Activated T-helper 1 cell treated with anti-CD3 and anti-CD28 coated beads, Interleukin-12 subunit alpha, Interleukin-12 subunit beta, Interleukin-2, Interleukin-4 antibody, amounts not matched to agents 30 ng/mL and 10 ng/mL and 1 ng/mL, durations not matched to agents 14 hours and 24 hours and 36 hours (primary cell): ENCODE measurements at regions of chr19 and their contacts with region 1.

Region 1: DNA sequence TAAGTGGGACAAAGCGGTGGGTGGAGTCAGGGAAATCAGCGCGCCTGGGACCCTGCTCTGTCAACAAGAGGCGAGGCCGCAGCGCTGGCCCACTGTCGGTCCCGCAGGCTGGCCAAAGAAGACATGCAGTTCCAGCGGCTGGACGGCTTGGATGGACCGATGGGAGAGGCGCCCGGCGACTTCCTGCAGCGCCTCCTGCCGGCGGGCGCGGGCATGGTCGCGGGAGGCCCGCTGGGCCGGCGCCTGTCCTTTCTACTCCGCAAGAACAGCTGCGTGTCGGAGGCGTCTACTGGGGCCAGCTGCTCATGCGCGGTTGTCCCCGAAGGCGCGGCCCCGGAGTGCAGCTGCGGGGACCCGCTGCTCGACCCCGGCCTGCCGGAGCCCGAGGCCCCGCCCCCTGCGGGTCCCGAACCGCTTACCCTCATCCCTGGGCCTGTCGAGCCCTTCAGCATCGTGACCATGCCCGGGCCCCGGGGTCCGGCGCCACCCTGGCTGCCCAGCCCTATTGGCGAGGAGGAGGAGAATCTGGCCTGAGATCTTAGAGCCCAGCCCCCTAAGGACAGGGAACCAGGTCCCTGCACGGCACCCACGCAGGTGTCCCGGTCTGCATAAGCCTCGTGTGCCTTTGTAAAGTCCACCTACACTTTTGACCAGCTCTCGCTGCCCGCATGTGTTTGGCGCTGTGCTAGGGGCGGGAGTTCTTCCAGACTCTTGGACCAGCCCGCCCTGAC is 6.1 kb downstream of the BEST2 start:
- DNase-seq: peak; percentile 68
- H3K4me3 Mint-ChIP-seq: peak overlapping the region; percentile 53
- H3K27ac Mint-ChIP-seq: no peak overlapping the region
- H3K4me1 Mint-ChIP-seq: peaks cover 5% of the 10 kb centered on the region
- H3K27me3 Mint-ChIP-seq: peaks cover 8% of the 10 kb centered on the region

Region 2: DNA sequence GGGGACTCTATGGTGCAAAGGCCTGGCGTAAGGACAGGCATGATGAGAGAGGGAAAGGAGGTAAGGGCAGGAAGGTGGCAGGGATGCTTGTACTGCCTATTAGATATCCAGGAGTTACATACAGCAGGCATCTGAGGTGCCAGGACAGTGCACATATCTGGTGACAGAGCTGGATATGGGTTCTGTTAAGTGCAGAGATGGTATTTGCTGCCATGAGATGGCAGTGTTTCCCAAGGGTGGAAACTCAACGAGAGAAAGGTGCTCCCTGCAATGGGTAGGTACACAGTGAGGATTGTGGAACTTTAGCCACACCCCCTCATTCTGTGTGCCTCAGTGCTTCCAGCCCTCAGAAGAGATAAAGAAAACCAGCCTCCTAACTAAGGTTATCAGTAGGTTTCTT is 40.8 kb before region 1 on chr19:
- intact Hi-C with region 1: loop called (anchors 1 kb)
- DNase-seq: no peak
- H3K4me3 Mint-ChIP-seq: no peak overlapping the region
- H3K27ac Mint-ChIP-seq: peak overlapping the region; percentile 78
- H3K4me1 Mint-ChIP-seq: peaks cover 25% of the 10 kb centered on the region
- H3K27me3 Mint-ChIP-seq: no peaks in the 10 kb centered on the region

Region 3: DNA sequence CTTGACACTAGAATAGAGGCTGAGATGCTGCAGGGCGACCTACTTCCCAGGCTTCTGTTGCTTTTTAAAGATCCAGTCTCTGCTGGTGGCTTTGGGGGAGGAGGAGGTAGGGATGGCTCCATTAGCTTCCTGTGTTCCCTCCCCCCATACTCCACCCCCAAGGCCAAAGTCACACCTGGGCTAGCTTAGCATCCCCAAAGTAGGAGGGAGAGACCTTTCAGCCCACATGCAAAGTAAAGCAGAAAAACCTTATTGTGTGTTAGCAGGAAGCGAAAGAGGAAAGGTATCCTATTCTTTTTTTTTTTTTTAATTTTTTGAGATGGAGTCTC is 30.8 kb before region 1 on chr19:
- intact Hi-C with region 1: no loop called
- DNase-seq: no peak
- H3K4me3 Mint-ChIP-seq: no peak overlapping the region
- H3K27ac Mint-ChIP-seq: no peak overlapping the region
- H3K4me1 Mint-ChIP-seq: peaks cover 37% of the 10 kb centered on the region
- H3K27me3 Mint-ChIP-seq: no peaks in the 10 kb centered on the region